Aorta (tissue), 5 donors: ENCODE measurements at regions of chr1 and their contacts with region 1.

Region 1: GRCh38 chr1:229479660-229480399 is 28.3 kb downstream of the NUP133 start:
- DNase-seq: no peak
- ATAC-seq: no peak
- H3K4me3 ChIP-seq: no peak overlapping the region
- H3K27ac ChIP-seq: no peak overlapping the region
- H3K4me1 ChIP-seq: no peaks in the 10 kb centered on the region
- H3K27me3 ChIP-seq: no peaks in the 10 kb centered on the region

Region 2: GRCh38 chr1:229258031-229258756 is 221.6 kb before region 1 on chr1:
- intact Hi-C with region 1: loop called (anchors 1 to 2 kb)
- DNase-seq: peak in 1 of 2 donors; percentile 61
- ATAC-seq: peak; percentile 88
- H3K4me3 ChIP-seq: no peak overlapping the region
- H3K27ac ChIP-seq: no peak overlapping the region
- H3K4me1 ChIP-seq: no peaks in the 10 kb centered on the region
- H3K27me3 ChIP-seq: no peaks in the 10 kb centered on the region

Region 3: GRCh38 chr1:229841230-229841629 is 361.4 kb after region 1 on chr1:
- intact Hi-C with region 1: no loop called
- DNase-seq: no peak
- ATAC-seq: no peak
- H3K4me3 ChIP-seq: no peak overlapping the region
- H3K27ac ChIP-seq: no peak overlapping the region
- H3K4me1 ChIP-seq: peaks cover 9 to 12% of the 10 kb centered on the region in 2 donors
- H3K27me3 ChIP-seq: no peaks in the 10 kb centered on the region